ENCODE measurements at regions of chr1 and their contacts with region 1.

Region 1: GRCh38 chr1:214328770-214329469 is 48.0 kb downstream of the SMYD2 start:
- DNase-seq: peak; percentile 75 to 87
- H3K4me3 ChIP-seq: no peak overlapping the region
- H3K27ac ChIP-seq: no peak overlapping the region
- H3K4me1 ChIP-seq: no peaks in the 10 kb centered on the region; a peak in 2 of 7 replicates
- H3K27me3 ChIP-seq: no peaks in the 10 kb centered on the region
- CTCF ChIP-seq: peak; percentile 91 to 97 (median 96)
- EP300 ChIP-seq: peak in 1 of 2 experiments; percentile 8; a peak in 1 of 3 replicates
- POLR2A ChIP-seq: no peak
- RAD21 ChIP-seq: peak; percentile 100

Region 2: GRCh38 chr1:214076708-214077065 is 252.2 kb before region 1 on chr1:
- CTCF ChIA-PET with region 1: no interaction called
- POLR2A ChIA-PET with region 1: no interaction called
- DNase-seq: no peak
- H3K4me3 ChIP-seq: no peak overlapping the region
- H3K27ac ChIP-seq: no peak overlapping the region
- H3K4me1 ChIP-seq: peaks cover 0 to 9% (median 0%) of the 10 kb centered on the region in 4 experiments; a peak in 2 of 7 replicates
- H3K27me3 ChIP-seq: no peaks in the 10 kb centered on the region
- CTCF ChIP-seq: no peak
- EP300 ChIP-seq: no peak
- POLR2A ChIP-seq: no peak
- RAD21 ChIP-seq: no peak

Region 3: GRCh38 chr1:214198571-214198970 is 130.3 kb before region 1 on chr1:
- CTCF ChIA-PET with region 1: interaction called, 235 read pairs
- POLR2A ChIA-PET with region 1: no interaction called
- DNase-seq: no peak
- H3K4me3 ChIP-seq: no peak overlapping the region
- H3K27ac ChIP-seq: no peak overlapping the region
- H3K4me1 ChIP-seq: peaks cover 0 to under 1% (median 0%) of the 10 kb centered on the region in 4 experiments; a peak in 1 of 7 replicates
- H3K27me3 ChIP-seq: no peaks in the 10 kb centered on the region
- CTCF ChIP-seq: no peak
- EP300 ChIP-seq: no peak
- POLR2A ChIP-seq: no peak
- RAD21 ChIP-seq: no peak

Region 4: DNA sequence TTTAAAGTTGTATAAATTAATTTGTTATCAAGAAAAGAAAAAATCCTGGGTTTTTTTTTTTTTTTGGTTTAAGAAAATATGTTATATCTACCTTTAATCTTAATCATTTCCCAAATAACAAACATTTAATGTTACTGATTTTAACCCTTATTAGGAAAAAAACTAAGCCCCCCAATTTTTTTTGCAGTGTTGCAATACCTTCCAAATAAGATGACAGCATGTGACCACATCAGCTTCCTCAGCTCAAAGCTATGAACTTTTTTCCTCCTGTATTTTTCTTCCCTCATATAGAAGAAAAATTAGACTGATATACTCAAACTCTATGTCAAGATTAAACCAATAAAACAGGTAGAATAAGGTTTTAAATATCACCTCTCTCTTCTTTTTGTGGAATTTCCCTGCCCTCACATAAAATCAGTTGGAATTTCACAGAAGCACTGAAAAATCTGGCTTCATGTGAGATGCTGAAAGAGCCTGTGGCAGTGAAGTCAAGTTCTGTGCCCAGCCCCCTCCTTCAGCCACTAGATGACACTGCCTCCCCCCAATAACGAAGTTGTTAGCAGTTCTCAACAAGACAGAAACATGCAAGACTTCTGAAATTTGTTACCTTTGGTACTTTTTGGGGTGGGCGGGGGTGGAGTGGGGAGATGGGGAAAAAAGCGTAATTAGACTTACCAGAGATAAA is 57.6 kb before region 1 on chr1:
- CTCF ChIA-PET with region 1: interaction called, 162 read pairs
- POLR2A ChIA-PET with region 1: no interaction called
- DNase-seq: no peak
- H3K4me3 ChIP-seq: no peak overlapping the region
- H3K27ac ChIP-seq: no peak overlapping the region
- H3K4me1 ChIP-seq: peaks cover 0 to 2% (median 0%) of the 10 kb centered on the region in 4 experiments; a peak in 4 of 7 replicates
- H3K27me3 ChIP-seq: no peaks in the 10 kb centered on the region
- CTCF ChIP-seq: peak; percentile 39 to 50 (median 46)
- EP300 ChIP-seq: no peak
- POLR2A ChIP-seq: no peak
- RAD21 ChIP-seq: peak; percentile 68 to 77

Region 5: GRCh38 chr1:214316593-214316992 is 12.3 kb before region 1 on chr1:
- CTCF ChIA-PET with region 1: interaction called, 262 read pairs
- POLR2A ChIA-PET with region 1: interaction called, 11 read pairs
- DNase-seq: peak; percentile 55 to 88
- H3K4me3 ChIP-seq: peak overlapping the region in 1 of 4 experiments; percentile 45; a peak in 2 of 8 replicates
- H3K27ac ChIP-seq: no peak overlapping the region
- H3K4me1 ChIP-seq: peaks cover 3 to 23% (median 15%) of the 10 kb centered on the region in 4 experiments
- H3K27me3 ChIP-seq: peaks cover 20 to 50% (median 45%) of the 10 kb centered on the region in 4 experiments; a peak in 6 of 7 replicates
- CTCF ChIP-seq: no peak
- EP300 ChIP-seq: peak in 1 of 2 experiments; percentile 97; a peak in 2 of 3 replicates
- POLR2A ChIP-seq: 0 out of 3 replicates have a peak, but pooled peaks of 1 of the 2 experiments have one; percentile 44
- RAD21 ChIP-seq: no peak

Region 6: DNA sequence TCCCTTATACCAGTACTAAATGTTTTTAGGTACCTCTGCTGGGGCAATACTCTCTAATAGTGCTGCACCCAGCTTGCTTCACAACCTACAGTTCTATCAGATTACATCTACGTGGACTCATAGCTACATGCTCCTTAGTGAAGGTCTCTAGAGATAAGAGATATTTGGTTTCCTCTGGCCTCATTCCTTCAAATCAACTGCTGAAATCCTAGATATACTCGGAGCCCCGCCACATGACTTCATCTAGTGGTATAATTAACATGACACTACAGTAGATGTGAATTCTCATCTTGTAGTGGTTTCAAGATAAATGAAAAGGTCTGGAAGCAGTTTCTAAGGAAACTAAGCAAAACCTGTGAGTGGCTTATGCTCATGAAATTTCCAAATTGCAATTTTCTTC is 67.4 kb after region 1 on chr1:
- CTCF ChIA-PET with region 1: interaction called, 21 read pairs
- POLR2A ChIA-PET with region 1: no interaction called
- DNase-seq: no peak
- H3K4me3 ChIP-seq: no peak overlapping the region
- H3K27ac ChIP-seq: no peak overlapping the region
- H3K4me1 ChIP-seq: peaks cover 0 to 7% (median 3%) of the 10 kb centered on the region in 4 experiments; a peak in 2 of 7 replicates
- H3K27me3 ChIP-seq: no peaks in the 10 kb centered on the region
- CTCF ChIP-seq: no peak
- EP300 ChIP-seq: no peak
- POLR2A ChIP-seq: no peak
- RAD21 ChIP-seq: no peak

Region 7: GRCh38 chr1:214602764-214603657 is 274.1 kb after region 1 on chr1 and contains the start of gene CENPF:
- CTCF ChIA-PET with region 1: interaction called, 13 read pairs
- POLR2A ChIA-PET with region 1: interaction called, 3 read pairs
- DNase-seq: peak; percentile 92 to 98
- H3K4me3 ChIP-seq: peak within 1 kb of the TSS; percentile 84 to 95 (median 87)
- H3K27ac ChIP-seq: peak within 1 kb of the TSS; percentile 81
- H3K4me1 ChIP-seq: peaks cover 0 to 2% (median under 1%) of the 10 kb centered on the region in 4 experiments; a peak in 2 of 7 replicates
- H3K27me3 ChIP-seq: no peaks in the 10 kb centered on the region
- CTCF ChIP-seq: peak in 1 of 3 experiments; percentile 2; a peak in 1 of 4 replicates
- EP300 ChIP-seq: no peak
- POLR2A ChIP-seq: peak; percentile 73 to 90
- RAD21 ChIP-seq: no peak
- total RNA-seq, gene CENPF: 170 and 175 TPM in 2 replicates